Pancreas (tissue), 10 donors: ENCODE measurements at regions of chr3 and their contacts with region 1.

Region 1: DNA sequence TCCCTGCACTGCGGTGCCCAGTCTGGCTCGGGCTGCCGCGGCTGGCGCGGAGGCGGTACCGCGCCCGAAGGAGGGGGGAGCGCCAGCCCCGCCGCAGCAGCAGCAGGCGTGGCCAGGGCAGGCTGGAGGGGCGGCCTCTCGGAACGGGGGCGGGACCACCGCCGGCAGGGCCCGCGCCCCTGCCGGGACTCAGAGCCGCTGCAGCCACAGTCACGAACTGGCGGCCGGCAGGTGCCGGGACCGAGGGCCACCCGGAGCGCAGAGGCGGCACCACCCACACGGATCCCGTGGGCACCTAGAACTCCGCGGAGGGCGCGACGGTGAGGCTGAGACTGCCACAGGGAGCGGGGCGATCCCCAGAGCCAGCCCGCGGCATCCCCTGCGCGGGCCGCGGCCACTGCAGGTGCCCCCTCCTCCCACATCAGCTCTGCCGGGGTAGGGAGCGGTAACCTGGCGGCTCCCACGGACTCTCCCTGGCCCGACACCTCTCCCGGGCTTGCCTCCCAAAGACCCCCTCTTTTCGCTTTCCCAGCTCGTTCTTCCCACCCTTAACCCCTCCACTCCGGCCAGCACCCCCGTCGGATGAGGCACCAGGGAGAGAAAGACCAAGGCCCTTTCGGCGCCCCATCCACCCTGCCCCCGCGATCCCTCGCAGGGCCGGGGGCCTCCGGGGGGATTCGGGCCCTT is at the start of gene VWA5B2:
- DNase-seq: peak; percentile 64 to 85 (median 72)
- ATAC-seq: peak; percentile 82 to 92 (median 88)
- H3K4me3 ChIP-seq: peak within 1 kb of the TSS; percentile 23 to 69 (median 44)
- H3K27ac ChIP-seq: no peak within 1 kb of the TSS
- H3K4me1 ChIP-seq: peaks cover 0 to 8% (median 6%) of the 10 kb centered on the region in 3 donors
- H3K27me3 ChIP-seq: no peaks in the 10 kb centered on the region
- CTCF ChIP-seq: no peak
- total RNA-seq, gene VWA5B2: 1.2 to 7.9 (median 4.5) TPM

Region 2: GRCh38 chr3:183895296-183895695 is 334.2 kb before region 1 on chr3:
- intact Hi-C with region 1: loop called in 1 of 3 experiments (anchors 10 kb)
- DNase-seq: peak in 2 of 6 donors; percentile 22 to 50
- ATAC-seq: peak; percentile 73 to 97 (median 94)
- H3K4me3 ChIP-seq: no peak overlapping the region
- H3K27ac ChIP-seq: no peak overlapping the region
- H3K4me1 ChIP-seq: no peaks in the 10 kb centered on the region
- H3K27me3 ChIP-seq: no peaks in the 10 kb centered on the region
- CTCF ChIP-seq: peak; percentile 56 to 70 (median 60)

Region 3: DNA sequence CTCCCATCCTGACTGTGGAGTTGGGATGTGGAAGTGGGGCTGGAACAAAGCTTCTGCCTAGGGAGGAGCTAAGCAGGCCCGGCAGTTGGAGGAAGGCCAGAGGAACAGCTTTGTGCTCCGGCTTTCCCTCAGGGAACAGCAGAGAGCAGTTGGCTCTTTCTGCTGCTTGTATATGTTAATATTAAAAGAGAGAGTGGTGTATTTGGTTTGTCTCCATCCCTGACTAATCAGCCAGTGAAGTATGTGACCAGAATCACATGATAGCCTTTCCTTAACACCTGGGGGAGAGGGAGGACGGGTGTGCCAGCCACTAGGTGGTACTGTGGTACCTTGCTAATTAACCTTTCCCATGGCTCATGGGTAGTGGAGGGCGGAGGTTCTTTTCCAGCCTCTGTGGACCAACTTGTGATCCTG is 84.4 kb before region 1 on chr3:
- intact Hi-C with region 1: loop called in 1 of 3 experiments (anchors 10 kb)
- DNase-seq: peak in 4 of 6 donors; percentile 59 to 71 (median 62)
- ATAC-seq: peak; percentile 84 to 99 (median 95)
- H3K4me3 ChIP-seq: no peak overlapping the region
- H3K27ac ChIP-seq: no peak overlapping the region
- H3K4me1 ChIP-seq: no peaks in the 10 kb centered on the region
- H3K27me3 ChIP-seq: no peaks in the 10 kb centered on the region
- CTCF ChIP-seq: peak; percentile 13 to 28 (median 24)